Activated CD4-positive, alpha-beta memory T cell treated with anti-CD3 and anti-CD28 coated beads for 36 hours (primary cell): ENCODE measurements at regions of chr5 and their contacts with region 1.

Region 1: GRCh38 chr5:87267574-87268125 is at the start of gene RASA1:
- DNase-seq: peak; percentile 92
- H3K4me3 Mint-ChIP-seq: peak within 1 kb of the TSS; percentile 99
- H3K27ac Mint-ChIP-seq: peak within 1 kb of the TSS; percentile 99
- H3K4me1 Mint-ChIP-seq: peaks cover 34% of the 10 kb centered on the region
- H3K27me3 Mint-ChIP-seq: no peaks in the 10 kb centered on the region
- total RNA-seq, gene RASA1: 25.1 to 25.4 TPM

Region 2: GRCh38 chr5:86617756-86618576 is 649.7 kb before region 1 on chr5 and contains the start of gene COX7C:
- CTCF ChIA-PET with region 1: no interaction called
- POLR2A ChIA-PET with region 1: no interaction called
- intact Hi-C with region 1: loop called (anchors 5 kb)
- DNase-seq: peak; percentile 95
- H3K4me3 Mint-ChIP-seq: peak within 1 kb of the TSS; percentile 100
- H3K27ac Mint-ChIP-seq: peak within 1 kb of the TSS; percentile 99
- H3K4me1 Mint-ChIP-seq: peaks cover 20% of the 10 kb centered on the region
- H3K27me3 Mint-ChIP-seq: peaks cover 3% of the 10 kb centered on the region
- total RNA-seq, gene COX7C: 640 to 681 TPM

Region 3: GRCh38 chr5:87069974-87070624 is 197.6 kb before region 1 on chr5:
- CTCF ChIA-PET with region 1: no interaction called
- POLR2A ChIA-PET with region 1: no interaction called
- intact Hi-C with region 1: loop called (anchors 5 kb)
- DNase-seq: no peak
- H3K4me3 Mint-ChIP-seq: no peak overlapping the region
- H3K27ac Mint-ChIP-seq: no peak overlapping the region
- H3K4me1 Mint-ChIP-seq: peaks cover 16% of the 10 kb centered on the region
- H3K27me3 Mint-ChIP-seq: no peaks in the 10 kb centered on the region

Region 4: DNA sequence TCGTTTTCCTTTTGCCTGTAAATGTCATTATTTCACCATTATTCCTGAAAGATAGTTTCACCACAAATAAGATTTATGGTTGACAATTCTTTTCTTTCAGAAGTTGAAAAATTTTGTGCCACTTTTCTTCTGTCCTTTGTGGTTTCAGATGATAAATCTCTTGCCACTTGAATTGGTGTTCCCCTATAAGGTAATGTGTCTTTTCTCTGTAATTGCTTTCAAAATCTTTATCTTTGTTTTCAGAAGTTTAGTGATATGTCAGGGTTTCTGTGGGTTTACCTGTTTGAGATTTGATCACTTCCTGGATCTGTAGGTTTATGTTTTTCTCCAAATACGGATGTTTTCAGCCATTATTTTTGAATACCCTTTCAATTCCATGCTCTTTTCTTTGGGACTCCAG is 14.6 kb after region 1 on chr5:
- CTCF ChIA-PET with region 1: interaction called, 3 read pairs
- POLR2A ChIA-PET with region 1: no interaction called
- intact Hi-C with region 1: loop called (anchors 1 kb)
- DNase-seq: no peak
- H3K4me3 Mint-ChIP-seq: peak overlapping the region; percentile 70
- H3K27ac Mint-ChIP-seq: peak overlapping the region; percentile 89
- H3K4me1 Mint-ChIP-seq: peaks cover 48% of the 10 kb centered on the region
- H3K27me3 Mint-ChIP-seq: no peaks in the 10 kb centered on the region

Region 5: GRCh38 chr5:87300744-87301143 is 33.1 kb after region 1 on chr5:
- CTCF ChIA-PET with region 1: no interaction called
- POLR2A ChIA-PET with region 1: no interaction called
- intact Hi-C with region 1: loop called (anchors 2 kb)
- DNase-seq: peak; percentile 70
- H3K4me3 Mint-ChIP-seq: no peak overlapping the region
- H3K27ac Mint-ChIP-seq: no peak overlapping the region
- H3K4me1 Mint-ChIP-seq: peaks cover 65% of the 10 kb centered on the region
- H3K27me3 Mint-ChIP-seq: no peaks in the 10 kb centered on the region

Region 6: GRCh38 chr5:87340716-87341115 is 73.1 kb after region 1 on chr5:
- CTCF ChIA-PET with region 1: no interaction called
- POLR2A ChIA-PET with region 1: no interaction called
- intact Hi-C with region 1: loop called (anchors 1 kb)
- DNase-seq: no peak
- H3K4me3 Mint-ChIP-seq: peak overlapping the region; percentile 47
- H3K27ac Mint-ChIP-seq: peak overlapping the region; percentile 73
- H3K4me1 Mint-ChIP-seq: peaks cover 17% of the 10 kb centered on the region
- H3K27me3 Mint-ChIP-seq: no peaks in the 10 kb centered on the region

Region 7: DNA sequence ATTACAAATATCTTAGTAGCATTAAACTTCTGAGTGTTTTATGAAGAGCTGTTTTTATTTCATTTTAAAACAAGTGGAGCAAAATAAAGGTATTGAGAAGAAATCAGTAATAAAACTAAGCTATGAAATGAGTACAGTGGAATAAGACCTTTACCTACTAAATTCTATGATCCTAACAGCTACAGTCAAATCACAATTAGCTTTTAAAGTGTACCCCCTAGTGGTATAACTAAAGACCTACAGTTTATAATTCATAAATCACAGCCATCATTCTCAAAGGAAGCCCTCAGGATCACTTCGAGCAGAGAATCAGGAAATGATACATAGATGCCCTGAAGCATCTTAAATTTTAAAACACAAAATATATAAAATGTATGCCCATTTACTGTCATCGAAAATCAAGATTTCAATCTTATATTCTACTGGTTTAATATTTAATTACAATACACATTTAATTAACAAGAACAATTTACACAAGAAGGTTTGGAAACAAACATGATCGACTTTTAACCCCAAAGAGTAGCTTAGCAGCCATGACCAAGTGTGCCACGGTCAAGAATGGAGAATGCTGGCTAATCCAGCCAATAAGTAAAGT is 132.8 kb after region 1 on chr5:
- CTCF ChIA-PET with region 1: interaction called, 8 read pairs
- POLR2A ChIA-PET with region 1: no interaction called
- intact Hi-C with region 1: loop called (anchors 1 kb)
- DNase-seq: no peak
- H3K4me3 Mint-ChIP-seq: no peak overlapping the region
- H3K27ac Mint-ChIP-seq: no peak overlapping the region
- H3K4me1 Mint-ChIP-seq: peaks cover 31% of the 10 kb centered on the region
- H3K27me3 Mint-ChIP-seq: no peaks in the 10 kb centered on the region

Region 8: GRCh38 chr5:88203981-88204750 is 936.5 kb after region 1 on chr5:
- CTCF ChIA-PET with region 1: no interaction called
- POLR2A ChIA-PET with region 1: no interaction called
- intact Hi-C with region 1: no loop called
- DNase-seq: peak; percentile 68
- H3K4me3 Mint-ChIP-seq: peak overlapping the region; percentile 9
- H3K27ac Mint-ChIP-seq: peak overlapping the region; percentile 76
- H3K4me1 Mint-ChIP-seq: peaks cover 15% of the 10 kb centered on the region
- H3K27me3 Mint-ChIP-seq: no peaks in the 10 kb centered on the region